Natural killer cell (primary cell): ENCODE measurements at regions of chr1 and their contacts with region 1.

Region 1: GRCh38 chr1:184973272-184974055 is 844 bp downstream of the NIBAN1 start:
- DNase-seq: peak in 1 of 2 donors; percentile 87
- ATAC-seq: peak; percentile 70 to 77 (median 74)
- H3K4me3 ChIP-seq: peak overlapping the region; percentile 64
- H3K4me3 Mint-ChIP-seq: peak overlapping the region; percentile 93
- H3K27ac ChIP-seq: peak overlapping the region; percentile 80
- H3K27ac Mint-ChIP-seq: peak overlapping the region; percentile 37 to 63
- H3K4me1 ChIP-seq: peaks cover 25% of the 10 kb centered on the region
- H3K4me1 Mint-ChIP-seq: peaks cover 43 to 55% of the 10 kb centered on the region in 2 donors
- H3K27me3 ChIP-seq: no peaks in the 10 kb centered on the region
- H3K27me3 Mint-ChIP-seq: no peaks in the 10 kb centered on the region
- CTCF ChIP-seq: no peak

Region 2: DNA sequence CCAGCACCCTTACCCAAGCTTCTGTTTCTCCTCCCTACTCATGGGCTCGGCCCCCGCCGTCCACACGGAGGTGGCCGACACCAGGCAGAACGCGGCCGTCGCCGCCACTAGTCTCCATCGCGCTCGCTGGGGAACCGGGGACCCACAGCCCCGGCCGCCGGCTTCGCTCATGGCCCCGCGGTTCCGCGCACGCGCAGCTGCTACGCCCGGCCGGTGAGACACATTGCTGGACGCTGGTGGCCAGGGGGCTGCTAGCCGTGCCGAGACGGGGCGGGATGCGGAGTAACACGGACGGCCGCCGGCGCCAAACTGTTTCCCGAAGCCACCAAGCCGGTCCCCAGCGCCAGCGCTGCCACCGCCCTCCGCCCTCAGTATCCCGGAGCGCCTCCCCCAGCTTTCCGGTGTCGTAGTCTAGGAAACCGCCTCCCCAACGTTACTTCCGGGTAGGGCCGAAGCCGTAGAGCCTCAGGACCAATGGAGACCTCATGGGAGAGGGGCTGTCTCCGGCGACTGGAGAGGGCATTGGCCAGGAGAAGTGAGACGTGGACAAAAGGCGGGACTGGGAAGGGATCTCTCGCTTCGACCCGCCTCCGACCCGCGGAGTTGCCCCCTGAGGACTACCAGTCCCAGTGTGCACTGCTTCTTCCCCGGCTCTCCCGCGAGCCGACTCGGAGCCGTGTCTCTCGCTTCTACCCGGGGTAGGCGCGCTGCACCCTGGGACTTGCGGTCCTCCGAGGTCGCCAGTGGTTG is 218.8 kb before region 1 on chr1 and contains the start of gene EDEM3:
- intact Hi-C with region 1: loop called (anchors 5 kb)
- DNase-seq: peak; percentile 93 to 99
- ATAC-seq: peak; percentile 91 to 99 (median 92)
- H3K4me3 ChIP-seq: peak within 1 kb of the TSS; percentile 92
- H3K4me3 Mint-ChIP-seq: peak within 1 kb of the TSS; percentile 96
- H3K27ac ChIP-seq: peak within 1 kb of the TSS; percentile 87
- H3K27ac Mint-ChIP-seq: peak within 1 kb of the TSS; percentile 80 to 96
- H3K4me1 ChIP-seq: peaks cover 6% of the 10 kb centered on the region
- H3K4me1 Mint-ChIP-seq: peaks cover 32 to 33% of the 10 kb centered on the region in 2 donors
- H3K27me3 ChIP-seq: no peaks in the 10 kb centered on the region
- H3K27me3 Mint-ChIP-seq: peaks cover 0 to 20% of the 10 kb centered on the region in 2 donors
- CTCF ChIP-seq: no peak
- total RNA-seq, gene EDEM3: 8.9 to 15.4 (median 15.1) TPM